ENCODE measurements at regions of chr14 and their contacts with region 1.

Region 1: DNA sequence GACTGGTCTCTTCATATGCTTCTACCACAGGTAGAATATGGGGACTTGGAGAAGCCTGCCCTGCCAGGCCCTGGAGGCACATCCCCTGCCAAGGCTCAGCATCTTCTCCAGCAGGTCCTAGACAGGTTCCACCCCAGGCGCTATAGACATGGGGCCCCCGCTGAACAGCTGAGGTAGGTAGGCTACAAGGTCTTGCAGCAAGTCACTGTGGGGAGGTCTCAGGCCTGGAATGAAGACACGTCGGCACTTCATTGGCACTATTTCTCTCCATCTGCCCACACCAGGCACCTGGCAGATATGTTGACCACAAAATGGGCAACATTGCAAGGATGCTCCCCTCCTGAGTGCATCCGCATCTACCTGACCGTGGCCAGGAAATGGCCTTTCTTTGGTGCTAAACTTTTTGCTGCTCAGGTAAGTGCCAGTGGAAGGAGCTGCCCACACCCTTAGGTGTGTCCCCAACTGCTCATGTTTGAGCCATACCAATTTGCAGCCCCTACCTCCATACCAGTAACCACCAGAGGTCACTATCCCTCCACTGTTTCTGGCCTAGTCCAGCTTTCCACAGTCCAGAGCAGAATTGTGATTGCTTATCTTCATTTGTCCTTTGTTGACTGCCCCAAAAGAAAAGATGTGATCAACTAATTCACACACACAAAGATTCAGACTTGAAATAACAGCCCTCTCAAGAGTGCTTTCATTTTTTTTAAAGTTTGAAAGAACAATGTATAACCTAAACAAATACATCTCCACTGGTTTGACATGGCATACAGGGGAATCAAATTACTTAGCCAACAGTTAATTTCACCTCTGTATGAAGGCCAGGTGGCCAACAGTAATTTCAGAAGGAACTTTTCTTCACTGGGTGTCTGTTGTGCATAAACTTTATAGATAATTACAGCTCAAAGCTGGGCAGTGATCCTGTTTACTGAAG is 16.1 kb downstream of the PIGH start:
- DNase-seq: peak in 1 of 2 donors; percentile 45
- H3K4me3 ChIP-seq: no peak overlapping the region
- H3K27ac ChIP-seq: no peak overlapping the region
- H3K4me1 ChIP-seq: no peaks in the 10 kb centered on the region
- H3K27me3 ChIP-seq: no peaks in the 10 kb centered on the region
- CTCF ChIP-seq: peak; percentile 47 to 73 (median 66)
- POLR2A ChIP-seq: no peak

Region 2: DNA sequence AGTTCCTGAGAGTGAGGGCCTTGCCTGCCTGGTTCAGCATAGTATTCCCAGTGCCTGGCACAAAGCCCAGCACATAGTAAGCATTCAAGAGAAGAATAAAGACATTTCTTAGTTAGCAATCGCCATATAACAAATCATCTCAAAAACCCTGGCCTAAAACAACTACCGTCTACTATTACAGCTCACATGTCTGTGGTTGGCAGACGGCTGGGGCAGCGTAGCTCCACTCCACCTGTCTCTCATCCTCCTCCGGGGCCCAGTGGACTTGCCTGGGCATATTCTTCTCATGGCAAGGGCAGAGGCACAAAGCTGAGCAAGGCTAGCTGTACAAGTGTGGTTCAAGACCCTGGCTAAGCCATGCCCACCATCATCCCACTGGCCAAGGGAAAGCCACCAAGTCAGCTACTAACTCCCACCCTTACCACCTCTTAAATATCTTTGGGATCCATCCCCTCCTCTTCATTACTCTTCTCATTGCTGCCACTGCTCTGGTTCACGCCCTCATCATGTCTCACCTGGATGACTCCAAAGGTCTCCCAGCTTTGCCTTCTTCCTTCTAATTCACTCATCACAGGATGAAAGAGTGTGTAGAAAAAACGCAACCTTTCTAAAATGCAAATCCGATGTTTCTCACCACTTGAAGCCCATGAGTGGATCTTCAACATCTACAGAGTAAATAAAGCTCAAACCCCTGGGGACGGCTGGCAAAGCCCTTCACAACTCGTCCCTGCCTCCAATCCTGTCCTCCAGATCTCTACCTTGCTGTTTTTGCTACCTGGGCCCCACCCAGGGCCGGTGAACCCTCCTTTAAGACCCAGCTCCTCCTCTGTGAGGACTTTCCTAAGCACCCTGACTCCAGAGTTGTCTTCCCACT is 105.8 kb before region 1 on chr14:
- intact Hi-C with region 1: no loop called
- DNase-seq: no peak
- H3K4me3 ChIP-seq: no peak overlapping the region
- H3K27ac ChIP-seq: no peak overlapping the region
- H3K4me1 ChIP-seq: no peaks in the 10 kb centered on the region
- H3K27me3 ChIP-seq: no peaks in the 10 kb centered on the region
- CTCF ChIP-seq: no peak
- POLR2A ChIP-seq: no peak

Region 3: GRCh38 chr14:67551940-67552339 is 32.0 kb before region 1 on chr14:
- intact Hi-C with region 1: no loop called
- DNase-seq: no peak
- H3K4me3 ChIP-seq: no peak overlapping the region
- H3K27ac ChIP-seq: no peak overlapping the region
- H3K4me1 ChIP-seq: no peaks in the 10 kb centered on the region
- H3K27me3 ChIP-seq: no peaks in the 10 kb centered on the region
- CTCF ChIP-seq: no peak
- POLR2A ChIP-seq: no peak

Region 4: GRCh38 chr14:67666750-67667449 is 82.9 kb after region 1 on chr14:
- intact Hi-C with region 1: loop called (anchors 10 kb)
- DNase-seq: peak in 1 of 2 donors; percentile 29
- H3K4me3 ChIP-seq: no peak overlapping the region
- H3K27ac ChIP-seq: no peak overlapping the region
- H3K4me1 ChIP-seq: no peaks in the 10 kb centered on the region
- H3K27me3 ChIP-seq: no peaks in the 10 kb centered on the region
- CTCF ChIP-seq: peak; percentile 52 to 78 (median 66)
- POLR2A ChIP-seq: no peak